H1 (cell line): ENCODE measurements at regions of chr11 and their contacts with region 1.

Region 1: DNA sequence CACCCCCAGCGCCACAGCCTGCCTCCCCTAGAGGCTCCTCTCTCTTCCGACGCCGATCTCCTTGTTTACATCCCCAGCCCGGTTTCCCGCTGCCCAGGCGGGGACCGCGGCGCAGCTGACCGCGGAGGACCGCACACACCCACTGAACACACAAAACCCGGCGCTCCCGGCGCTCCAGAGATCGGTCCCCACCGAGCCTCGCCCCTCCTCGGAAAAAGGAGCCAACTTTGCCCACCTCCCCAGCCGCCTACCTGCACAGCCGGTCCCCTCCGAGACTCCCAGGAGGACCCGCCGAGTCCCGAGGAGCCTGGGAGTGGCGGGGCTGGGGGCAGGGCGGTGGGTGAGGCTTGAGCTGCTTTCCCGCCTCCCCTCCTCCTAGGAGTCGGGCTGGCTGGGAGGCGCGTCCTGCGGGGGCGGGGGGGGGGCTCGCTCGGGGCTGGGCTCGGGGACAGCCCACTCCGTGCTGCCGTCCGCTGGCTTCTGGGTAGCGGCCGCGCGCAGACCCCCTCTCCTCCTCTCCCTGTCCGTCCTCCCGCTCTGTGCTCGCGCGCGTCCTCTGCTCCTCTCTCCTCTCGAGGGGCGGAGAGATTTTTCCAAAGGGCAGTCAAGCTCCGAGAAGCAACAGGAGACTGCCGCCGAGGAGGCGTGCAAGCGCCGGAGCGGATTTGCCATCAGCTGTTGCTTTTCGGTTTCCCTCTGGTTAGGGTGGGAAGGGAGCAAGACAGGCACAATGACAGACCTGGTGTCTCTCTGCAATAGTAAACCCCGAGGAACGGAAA is at the start of gene FXYD6:
- DNase-seq: peak in 1 of 2 experiments; percentile 78
- H3K4me3 ChIP-seq: peak within 1 kb of the TSS; percentile 86 to 96 (median 87)
- H3K27ac ChIP-seq: no peak within 1 kb of the TSS
- H3K4me1 ChIP-seq: peaks cover 9 to 27% (median 21%) of the 10 kb centered on the region in 4 experiments
- H3K27me3 ChIP-seq: peaks cover 0 to 17% (median 15%) of the 10 kb centered on the region in 4 experiments; a peak in 4 of 7 replicates
- CTCF ChIP-seq: no peak
- EP300 ChIP-seq: no peak
- POLR2A ChIP-seq: no peak
- RAD21 ChIP-seq: no peak
- total RNA-seq, gene FXYD6: 44.6 and 50.0 TPM in 2 replicates

Region 2: DNA sequence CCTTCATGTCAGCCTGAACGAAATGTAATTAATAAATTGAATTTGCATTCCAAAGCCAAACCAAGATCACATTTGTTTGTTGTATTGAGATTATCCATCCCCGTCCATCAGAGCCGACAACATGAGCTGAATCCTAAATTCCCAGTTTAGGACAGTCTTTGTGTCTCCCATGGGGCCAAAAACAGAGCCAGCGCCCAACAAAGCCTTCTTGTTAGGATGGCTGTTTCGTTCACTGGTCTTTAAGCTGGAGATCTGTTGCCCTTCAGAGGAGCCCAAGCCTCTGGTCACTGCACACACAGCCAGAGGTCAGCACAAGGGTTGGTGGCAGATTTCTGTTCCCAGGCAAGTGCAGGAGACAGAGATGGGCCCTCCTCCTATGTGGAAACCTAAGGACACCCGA is 105.3 kb before region 1 on chr11:
- CTCF ChIA-PET with region 1: no interaction called
- POLR2A ChIA-PET with region 1: no interaction called
- DNase-seq: no peak
- H3K4me3 ChIP-seq: no peak overlapping the region
- H3K27ac ChIP-seq: no peak overlapping the region
- H3K4me1 ChIP-seq: no peaks in the 10 kb centered on the region
- H3K27me3 ChIP-seq: 0 out of 7 replicates have a peak, but pooled peaks cover 0 to 2% (median 0%) of the 10 kb centered on the region in 4 experiments
- CTCF ChIP-seq: no peak
- EP300 ChIP-seq: no peak
- POLR2A ChIP-seq: no peak
- RAD21 ChIP-seq: no peak

Region 3: DNA sequence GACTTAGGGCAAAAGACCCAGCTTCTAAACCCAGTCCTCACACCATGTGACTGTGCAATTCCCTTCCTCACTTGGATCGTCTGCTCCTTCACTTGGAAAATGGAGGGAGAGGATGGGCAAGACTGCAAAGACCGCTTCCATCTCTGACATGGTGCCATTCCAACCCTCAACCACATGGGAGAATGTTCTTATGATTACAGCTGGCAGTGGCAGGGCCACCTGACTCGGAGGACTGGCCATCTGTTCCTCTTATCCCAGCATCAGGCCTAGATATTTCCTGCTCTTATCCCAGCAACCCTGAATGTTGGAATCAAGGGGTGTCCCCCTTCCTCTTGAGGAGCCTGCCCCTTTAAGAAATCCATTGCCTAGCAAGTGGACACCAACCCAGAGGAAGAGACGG is 94.9 kb before region 1 on chr11:
- CTCF ChIA-PET with region 1: no interaction called
- POLR2A ChIA-PET with region 1: no interaction called
- DNase-seq: no peak
- H3K4me3 ChIP-seq: no peak overlapping the region
- H3K27ac ChIP-seq: no peak overlapping the region
- H3K4me1 ChIP-seq: no peaks in the 10 kb centered on the region
- H3K27me3 ChIP-seq: 0 out of 7 replicates have a peak, but pooled peaks cover 0 to 1% (median 0%) of the 10 kb centered on the region in 4 experiments
- CTCF ChIP-seq: no peak
- EP300 ChIP-seq: no peak
- POLR2A ChIP-seq: no peak
- RAD21 ChIP-seq: no peak

Region 4: GRCh38 chr11:117861151-117862018 is 15.1 kb before region 1 on chr11:
- CTCF ChIA-PET with region 1: interaction called, 7 read pairs
- POLR2A ChIA-PET with region 1: interaction called, 12 read pairs
- DNase-seq: peak; percentile 72 to 75
- H3K4me3 ChIP-seq: 0 out of 8 replicates have a peak overlapping the region, but pooled peaks of 1 of the 4 experiments have one; percentile 1
- H3K27ac ChIP-seq: no peak overlapping the region
- H3K4me1 ChIP-seq: peaks cover 6 to 17% (median 13%) of the 10 kb centered on the region in 4 experiments
- H3K27me3 ChIP-seq: no peaks in the 10 kb centered on the region
- CTCF ChIP-seq: no peak
- EP300 ChIP-seq: no peak
- POLR2A ChIP-seq: no peak
- RAD21 ChIP-seq: no peak; a peak in 1 of 4 replicates

Region 5: DNA sequence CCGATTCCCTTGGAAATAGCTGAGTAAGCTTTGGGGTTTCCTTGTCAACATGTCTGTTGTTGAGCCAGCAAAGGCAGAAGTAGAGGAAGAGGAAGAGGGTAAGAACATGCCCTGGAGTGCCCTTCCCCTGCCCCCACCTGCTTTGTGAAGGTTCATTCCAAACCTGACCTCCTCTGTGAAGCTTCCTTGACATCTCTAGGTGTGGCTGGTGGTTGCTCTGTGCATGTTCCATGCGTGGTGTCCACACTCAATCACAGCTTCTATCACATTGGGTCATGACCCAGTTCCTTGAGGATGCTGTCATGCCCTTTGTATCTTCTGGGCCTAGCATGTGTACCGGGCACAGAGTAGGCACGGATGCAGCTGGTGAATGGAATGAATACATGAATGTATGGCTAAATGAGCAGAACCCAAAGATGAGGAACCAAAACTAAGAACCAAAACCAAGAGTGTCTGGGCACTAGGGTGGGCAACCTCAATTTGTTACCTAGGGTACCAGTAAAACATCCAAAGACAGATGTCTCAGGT is 23.7 kb after region 1 on chr11:
- CTCF ChIA-PET with region 1: interaction called, 30 read pairs
- POLR2A ChIA-PET with region 1: interaction called, 3 read pairs
- DNase-seq: no peak
- H3K4me3 ChIP-seq: no peak overlapping the region
- H3K27ac ChIP-seq: no peak overlapping the region
- H3K4me1 ChIP-seq: no peaks in the 10 kb centered on the region; a peak in 1 of 7 replicates
- H3K27me3 ChIP-seq: peaks cover 0 to 2% (median 0%) of the 10 kb centered on the region in 4 experiments; a peak in 1 of 7 replicates
- CTCF ChIP-seq: no peak
- EP300 ChIP-seq: no peak
- POLR2A ChIP-seq: no peak
- RAD21 ChIP-seq: no peak